Tibial artery (tissue), 4 donors: ENCODE measurements at regions of chr18 and their contacts with region 1.

Region 1: GRCh38 chr18:9136315-9137155 is at the start of gene ANKRD12:
- DNase-seq: peak; percentile 97 to 99
- H3K4me3 ChIP-seq: peak within 1 kb of the TSS; percentile 68 to 80
- H3K27ac ChIP-seq: peak within 1 kb of the TSS; percentile 96 to 99
- H3K4me1 ChIP-seq: peaks cover 0 to 39% (median 27%) of the 10 kb centered on the region in 4 donors
- H3K27me3 ChIP-seq: no peaks in the 10 kb centered on the region
- CTCF ChIP-seq: no peak

Region 2: GRCh38 chr18:8124232-8125153 is 1012.0 kb before region 1 on chr18:
- intact Hi-C with region 1: no loop called
- DNase-seq: no peak
- H3K4me3 ChIP-seq: no peak overlapping the region
- H3K27ac ChIP-seq: no peak overlapping the region
- H3K4me1 ChIP-seq: peaks cover 0 to 7% (median 3%) of the 10 kb centered on the region in 4 donors
- H3K27me3 ChIP-seq: no peaks in the 10 kb centered on the region
- CTCF ChIP-seq: no peak

Region 3: GRCh38 chr18:9102508-9103375 is 33.8 kb before region 1 on chr18 and contains the start of gene NDUFV2:
- intact Hi-C with region 1: loop called (anchors 2 kb)
- DNase-seq: peak; percentile 94 to 98
- H3K4me3 ChIP-seq: peak within 1 kb of the TSS; percentile 77 to 88
- H3K27ac ChIP-seq: peak within 1 kb of the TSS; percentile 90 to 97
- H3K4me1 ChIP-seq: peaks cover 0 to 48% (median 37%) of the 10 kb centered on the region in 4 donors
- H3K27me3 ChIP-seq: no peaks in the 10 kb centered on the region
- CTCF ChIP-seq: peak in 1 of 2 experiments; percentile 10